Activated B cell treated with CpG ODN at 0.5 μM for 24 hours (primary cell): ENCODE measurements at regions of chr3 and their contacts with region 1.

Region 1: DNA sequence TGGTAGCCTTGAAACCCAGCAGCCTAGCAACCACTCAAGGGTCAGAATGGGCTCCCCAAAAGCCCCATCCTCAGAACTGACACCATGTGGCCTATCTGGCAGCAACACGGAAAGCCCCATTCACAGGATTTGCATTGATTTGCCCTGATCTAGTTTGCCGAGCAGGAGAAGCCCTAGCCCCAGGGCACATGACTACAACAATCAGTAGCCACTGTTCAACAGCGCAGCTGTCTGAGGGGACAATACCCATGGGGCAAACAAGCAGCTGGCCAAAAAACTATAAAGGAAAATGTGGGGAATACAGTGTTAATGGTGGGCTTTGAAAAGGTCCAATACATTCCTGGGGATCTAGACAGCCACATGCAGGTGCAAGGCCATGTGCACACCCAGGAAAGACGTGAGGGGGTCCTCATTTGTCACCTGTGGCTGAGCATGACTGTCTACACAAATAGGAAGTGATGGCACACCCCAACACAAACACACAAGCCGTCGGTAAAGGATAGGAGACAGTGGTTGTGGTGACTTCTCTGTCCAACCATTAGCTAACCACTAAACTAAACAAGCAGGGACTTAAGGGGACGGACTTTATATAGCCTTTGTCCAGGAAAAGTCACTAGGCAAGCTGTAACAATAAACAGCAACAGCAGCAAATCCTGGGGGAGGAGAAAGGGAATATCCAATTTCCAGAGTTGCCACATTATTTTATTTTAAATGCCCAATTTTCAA is 113.7 kb downstream of the LRIG1 start:
- DNase-seq: no peak
- ATAC-seq: peak; percentile 76
- H3K4me3 Mint-ChIP-seq: peak overlapping the region; percentile 69
- H3K27ac Mint-ChIP-seq: peak overlapping the region; percentile 89
- H3K4me1 Mint-ChIP-seq: peaks cover 63% of the 10 kb centered on the region
- H3K27me3 Mint-ChIP-seq: no peaks in the 10 kb centered on the region
- CTCF ChIP-seq: no peak

Region 2: GRCh38 chr3:66220602-66221377 is 166.3 kb before region 1 on chr3 and contains the start of gene SLC25A26:
- CTCF ChIA-PET with region 1: no interaction called
- POLR2A ChIA-PET with region 1: no interaction called
- intact Hi-C with region 1: loop called (anchors 2 kb)
- DNase-seq: peak; percentile 90
- ATAC-seq: peak; percentile 96
- H3K4me3 Mint-ChIP-seq: peak within 1 kb of the TSS; percentile 98
- H3K27ac Mint-ChIP-seq: peak within 1 kb of the TSS; percentile 93
- H3K4me1 Mint-ChIP-seq: peaks cover 40% of the 10 kb centered on the region
- H3K27me3 Mint-ChIP-seq: peaks cover 3% of the 10 kb centered on the region
- CTCF ChIP-seq: no peak
- total RNA-seq, gene SLC25A26: 20.8 and 23.2 TPM in 2 replicates

Region 3: GRCh38 chr3:66302288-66302687 is 84.8 kb before region 1 on chr3:
- CTCF ChIA-PET with region 1: no interaction called
- POLR2A ChIA-PET with region 1: no interaction called
- intact Hi-C with region 1: loop called (anchors 5 kb)
- DNase-seq: no peak
- ATAC-seq: peak; percentile 54
- H3K4me3 Mint-ChIP-seq: peak overlapping the region; percentile 21
- H3K27ac Mint-ChIP-seq: peak overlapping the region; percentile 62
- H3K4me1 Mint-ChIP-seq: peaks cover 51% of the 10 kb centered on the region
- H3K27me3 Mint-ChIP-seq: no peaks in the 10 kb centered on the region
- CTCF ChIP-seq: no peak

Region 4: GRCh38 chr3:66756468-66757036 is 369.5 kb after region 1 on chr3:
- CTCF ChIA-PET with region 1: no interaction called
- POLR2A ChIA-PET with region 1: no interaction called
- intact Hi-C with region 1: no loop called
- DNase-seq: no peak
- ATAC-seq: no peak
- H3K4me3 Mint-ChIP-seq: no peak overlapping the region
- H3K27ac Mint-ChIP-seq: no peak overlapping the region
- H3K4me1 Mint-ChIP-seq: no peaks in the 10 kb centered on the region
- H3K27me3 Mint-ChIP-seq: peaks cover 8% of the 10 kb centered on the region
- CTCF ChIP-seq: no peak

Region 5: DNA sequence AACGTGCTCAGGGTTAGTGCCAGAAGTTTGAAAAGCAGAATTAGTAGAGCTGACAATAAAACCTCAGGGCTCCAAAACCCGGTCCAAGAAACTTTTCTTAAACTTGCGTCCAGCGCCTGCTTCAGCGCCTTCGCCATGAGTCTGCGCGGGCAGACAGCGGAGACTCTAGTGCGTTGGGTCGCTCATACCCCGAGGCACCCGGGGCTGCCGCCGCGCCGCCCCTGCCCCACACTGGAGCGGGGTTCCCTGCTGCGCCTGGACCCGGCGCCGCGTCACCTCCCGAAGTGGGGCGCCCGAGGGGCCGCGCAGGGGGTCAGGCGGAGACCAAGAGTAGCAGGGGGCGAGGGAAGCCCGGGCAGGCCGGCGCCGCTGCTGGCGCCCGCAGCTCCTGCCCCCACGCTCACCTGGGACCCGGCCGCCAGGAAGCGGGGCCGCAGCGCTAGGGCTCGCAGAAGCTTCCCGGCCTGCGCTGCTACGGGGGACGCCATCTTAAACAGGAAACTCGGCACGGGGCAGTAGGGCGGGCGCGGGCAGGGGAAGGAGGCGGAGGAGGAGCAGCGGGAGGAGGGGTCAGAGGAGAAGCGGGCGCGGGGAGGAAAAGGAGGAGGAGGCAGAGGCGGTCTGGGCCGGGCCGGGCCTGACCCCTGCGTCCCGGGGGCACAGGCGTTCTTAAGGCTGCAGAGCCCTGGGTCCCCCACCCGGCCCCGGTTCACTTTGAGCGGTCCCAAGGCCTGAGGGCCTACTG is 1267.2 kb after region 1 on chr3 and contains the start of gene SUCLG2:
- CTCF ChIA-PET with region 1: no interaction called
- POLR2A ChIA-PET with region 1: interaction called, 11 read pairs
- intact Hi-C with region 1: loop called (anchors 10 kb)
- DNase-seq: peak; percentile 80
- ATAC-seq: peak; percentile 83
- H3K4me3 Mint-ChIP-seq: peak within 1 kb of the TSS; percentile 86
- H3K27ac Mint-ChIP-seq: peak within 1 kb of the TSS; percentile 87
- H3K4me1 Mint-ChIP-seq: peaks cover 63% of the 10 kb centered on the region
- H3K27me3 Mint-ChIP-seq: no peaks in the 10 kb centered on the region
- CTCF ChIP-seq: no peak
- total RNA-seq, gene SUCLG2: 38.9 and 40.8 TPM in 2 replicates